MCF 10A (cell line): ENCODE measurements at regions of chr2 and their contacts with region 1.

Region 1: DNA sequence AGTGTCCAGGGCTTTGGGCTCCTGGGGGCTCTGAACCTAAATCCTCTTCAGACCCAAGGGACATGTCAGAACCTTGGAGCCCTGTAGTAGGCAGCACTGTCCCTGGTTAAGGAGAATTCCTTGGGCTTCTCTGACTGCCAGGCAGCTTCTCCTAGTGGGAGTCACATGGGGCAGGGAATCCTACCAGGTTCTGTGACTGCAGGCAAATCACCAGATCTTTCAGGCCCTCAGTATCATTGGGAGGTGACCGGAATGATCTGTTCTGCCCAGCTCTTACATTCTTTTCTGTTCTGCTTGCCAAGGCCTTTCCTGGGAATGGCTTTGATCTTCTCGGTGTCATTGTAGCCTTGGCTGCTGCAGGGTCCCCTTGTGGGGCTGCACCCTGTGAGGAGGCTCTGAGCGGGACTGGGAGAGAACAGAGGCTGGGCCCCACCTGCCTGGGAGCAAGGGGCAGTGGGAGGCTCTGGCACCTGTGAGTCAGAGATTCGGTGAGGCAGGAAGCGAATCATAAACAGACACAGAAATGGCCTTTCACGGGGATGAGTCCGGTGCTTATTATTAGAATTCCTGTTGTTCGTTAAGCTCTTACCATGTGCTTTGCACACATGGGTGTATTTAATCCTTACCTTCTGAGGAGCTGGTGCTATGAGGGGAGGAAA is 14.1 kb downstream of the CEP68 start:
- DNase-seq: peak; percentile 51
- H3K4me3 Mint-ChIP-seq: no peak overlapping the region
- H3K27ac Mint-ChIP-seq: peak overlapping the region; percentile 78
- H3K4me1 Mint-ChIP-seq: peaks cover 24% of the 10 kb centered on the region
- H3K27me3 Mint-ChIP-seq: no peaks in the 10 kb centered on the region
- CTCF ChIP-seq: no peak

Region 2: DNA sequence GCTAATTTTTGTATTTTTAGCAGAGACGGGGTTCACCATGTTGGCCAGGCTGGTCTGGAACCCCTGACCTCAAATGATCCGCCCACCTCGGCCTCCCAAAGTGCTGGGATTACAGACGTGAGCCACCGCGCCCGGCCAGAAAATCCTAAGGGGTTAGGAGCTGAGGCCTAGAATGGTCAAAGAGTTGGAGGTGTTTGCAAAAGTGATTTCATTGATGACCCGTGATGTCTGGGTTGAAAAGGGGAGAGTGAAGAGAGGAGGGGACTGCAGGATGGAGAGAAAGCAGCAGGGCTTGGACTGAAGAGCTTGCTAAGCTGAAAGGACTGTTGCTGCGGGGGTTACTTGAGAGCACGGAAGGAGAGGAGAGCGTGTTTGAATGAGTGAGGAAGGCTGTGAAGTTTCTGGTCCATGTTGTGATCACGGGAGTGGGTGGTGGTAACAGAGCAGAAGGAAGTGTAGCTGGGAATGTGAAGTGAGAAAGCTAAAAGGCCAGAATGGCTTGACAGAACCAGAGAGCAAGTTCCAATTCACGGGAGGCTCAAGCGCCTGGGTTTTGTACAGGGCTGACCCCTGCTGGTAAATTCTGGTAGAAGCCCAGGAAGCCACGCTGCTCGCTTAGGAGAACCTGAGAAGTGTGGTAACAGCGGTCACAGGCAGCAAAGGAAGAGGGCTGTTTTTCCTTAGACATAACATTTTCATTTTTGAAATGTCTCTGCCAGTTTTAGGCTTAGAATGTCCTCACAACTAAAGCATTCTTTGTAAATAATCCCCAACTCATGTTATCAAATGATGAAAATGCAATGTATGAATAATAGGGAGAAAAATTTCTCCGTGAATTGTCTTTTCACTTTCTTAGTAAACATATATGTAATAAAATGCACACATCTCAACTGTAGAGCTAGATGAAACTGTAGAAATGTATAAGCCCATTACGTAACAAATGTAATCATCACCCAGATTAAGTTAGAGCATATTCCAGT is 116.9 kb after region 1 on chr2:
- CTCF ChIA-PET with region 1: interaction called, 47 read pairs
- POLR2A ChIA-PET with region 1: interaction called, 5 read pairs
- intact Hi-C with region 1: loop called (anchors 1 kb)
- DNase-seq: peak; percentile 83
- H3K4me3 Mint-ChIP-seq: no peak overlapping the region
- H3K27ac Mint-ChIP-seq: no peak overlapping the region
- H3K4me1 Mint-ChIP-seq: peaks cover 5% of the 10 kb centered on the region
- H3K27me3 Mint-ChIP-seq: no peaks in the 10 kb centered on the region
- CTCF ChIP-seq: peak; percentile 67

Region 3: GRCh38 chr2:65576861-65577601 is 506.7 kb after region 1 on chr2:
- CTCF ChIA-PET with region 1: interaction called, 4 read pairs
- POLR2A ChIA-PET with region 1: no interaction called
- intact Hi-C with region 1: loop called (anchors 5 kb)
- DNase-seq: peak; percentile 89
- H3K4me3 Mint-ChIP-seq: peak overlapping the region; percentile 42
- H3K27ac Mint-ChIP-seq: peak overlapping the region; percentile 95
- H3K4me1 Mint-ChIP-seq: peaks cover 19% of the 10 kb centered on the region
- H3K27me3 Mint-ChIP-seq: no peaks in the 10 kb centered on the region
- CTCF ChIP-seq: no peak